Activated CD4-positive, alpha-beta memory T cell treated with anti-CD3 and anti-CD28 coated beads for 36 hours (primary cell): ENCODE measurements at regions of chr1 and their contacts with region 1.

Region 1: DNA sequence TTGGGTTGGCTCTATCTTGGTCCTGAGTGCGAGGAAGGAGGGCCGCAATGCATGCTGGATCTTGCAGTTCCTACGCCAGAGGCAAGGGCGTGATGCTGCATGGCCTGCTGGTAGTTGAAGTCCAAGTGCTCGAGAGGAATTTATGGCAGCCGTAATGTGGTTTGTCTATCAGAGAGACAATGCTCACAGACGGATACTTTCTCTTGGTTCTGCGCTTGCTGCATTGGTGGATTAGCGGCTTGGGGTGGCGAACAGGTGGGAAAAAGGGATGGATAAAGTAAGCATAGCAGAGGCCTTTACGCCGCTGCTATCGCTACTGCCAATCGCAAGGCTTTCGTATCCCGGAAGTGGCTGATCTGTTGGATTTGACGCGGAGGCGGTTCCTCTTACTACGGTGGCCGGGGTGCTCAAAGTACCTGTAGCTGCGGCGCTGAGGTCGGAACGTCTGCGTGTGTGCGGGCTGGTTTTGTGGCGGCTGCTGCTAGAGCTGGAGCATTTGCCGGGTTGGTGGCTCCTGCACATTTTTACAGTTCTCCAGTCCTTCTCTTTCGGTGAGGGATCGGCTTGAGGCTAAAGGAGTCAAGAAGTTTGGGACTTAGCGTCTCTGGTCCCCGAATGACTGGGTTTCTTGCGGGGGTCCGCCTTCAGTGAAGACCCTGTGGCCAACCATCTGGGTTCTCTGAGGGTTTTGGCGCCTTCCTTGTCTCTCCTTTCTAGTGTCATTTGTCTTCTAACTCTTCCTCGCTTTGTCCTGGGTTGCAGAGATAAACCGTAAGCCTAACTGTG is at the start of gene ATG4C:
- DNase-seq: peak; percentile 95
- H3K4me3 Mint-ChIP-seq: no peak within 1 kb of the TSS
- H3K27ac Mint-ChIP-seq: no peak within 1 kb of the TSS
- H3K4me1 Mint-ChIP-seq: peaks cover 11% of the 10 kb centered on the region
- H3K27me3 Mint-ChIP-seq: peaks cover 4% of the 10 kb centered on the region
- total RNA-seq, gene ATG4C: 14.6 to 15.9 TPM

Region 2: DNA sequence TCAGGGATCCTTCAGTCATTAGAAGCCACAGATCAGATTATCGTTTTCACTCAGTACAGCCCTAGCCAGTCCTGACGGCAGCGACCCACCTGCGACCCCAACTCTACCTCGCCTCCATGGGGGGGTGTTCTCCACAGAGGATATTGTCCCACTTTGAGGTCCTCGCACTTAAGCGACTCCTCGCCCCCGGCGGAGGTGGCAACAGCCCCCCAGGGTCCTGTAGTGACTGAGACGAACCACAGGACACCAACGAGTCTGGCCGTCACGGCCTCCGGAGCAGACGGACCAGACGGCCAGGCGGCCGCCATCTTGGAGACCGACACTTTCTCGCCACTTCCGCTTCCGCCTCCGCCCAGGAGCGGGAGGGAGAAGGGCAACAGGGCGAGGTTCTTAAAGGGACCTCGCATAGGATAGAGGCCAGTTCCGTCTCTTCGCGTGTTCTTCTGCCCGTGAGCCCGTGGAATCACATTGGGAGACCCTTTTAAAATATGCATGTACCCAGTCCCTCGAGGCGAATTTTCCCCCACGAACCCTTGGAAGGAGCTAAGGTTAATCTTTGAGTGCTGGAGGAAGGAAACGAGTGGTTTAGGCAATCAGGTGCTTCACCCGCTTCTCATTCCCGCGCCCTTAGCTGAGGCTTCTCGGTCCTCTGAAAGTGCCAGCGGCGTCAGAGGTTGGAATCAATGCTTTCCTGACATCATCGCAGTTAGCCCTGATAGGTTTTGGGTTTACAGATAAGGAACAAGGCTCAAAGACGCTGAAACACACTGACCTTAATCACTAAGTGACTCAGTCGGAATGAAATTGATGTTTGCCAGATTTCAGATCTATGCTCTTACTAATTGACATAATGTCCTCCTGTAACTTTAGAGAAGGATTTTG is 1058.9 kb before region 1 on chr1 and contains the start of gene TM2D1:
- CTCF ChIA-PET with region 1: no interaction called
- POLR2A ChIA-PET with region 1: no interaction called
- intact Hi-C with region 1: loop called (anchors 5 kb)
- DNase-seq: peak; percentile 93
- H3K4me3 Mint-ChIP-seq: peak within 1 kb of the TSS; percentile 98
- H3K27ac Mint-ChIP-seq: peak within 1 kb of the TSS; percentile 99
- H3K4me1 Mint-ChIP-seq: peaks cover 18% of the 10 kb centered on the region
- H3K27me3 Mint-ChIP-seq: no peaks in the 10 kb centered on the region
- total RNA-seq, gene TM2D1: 29.7 to 34.3 TPM

Region 3: DNA sequence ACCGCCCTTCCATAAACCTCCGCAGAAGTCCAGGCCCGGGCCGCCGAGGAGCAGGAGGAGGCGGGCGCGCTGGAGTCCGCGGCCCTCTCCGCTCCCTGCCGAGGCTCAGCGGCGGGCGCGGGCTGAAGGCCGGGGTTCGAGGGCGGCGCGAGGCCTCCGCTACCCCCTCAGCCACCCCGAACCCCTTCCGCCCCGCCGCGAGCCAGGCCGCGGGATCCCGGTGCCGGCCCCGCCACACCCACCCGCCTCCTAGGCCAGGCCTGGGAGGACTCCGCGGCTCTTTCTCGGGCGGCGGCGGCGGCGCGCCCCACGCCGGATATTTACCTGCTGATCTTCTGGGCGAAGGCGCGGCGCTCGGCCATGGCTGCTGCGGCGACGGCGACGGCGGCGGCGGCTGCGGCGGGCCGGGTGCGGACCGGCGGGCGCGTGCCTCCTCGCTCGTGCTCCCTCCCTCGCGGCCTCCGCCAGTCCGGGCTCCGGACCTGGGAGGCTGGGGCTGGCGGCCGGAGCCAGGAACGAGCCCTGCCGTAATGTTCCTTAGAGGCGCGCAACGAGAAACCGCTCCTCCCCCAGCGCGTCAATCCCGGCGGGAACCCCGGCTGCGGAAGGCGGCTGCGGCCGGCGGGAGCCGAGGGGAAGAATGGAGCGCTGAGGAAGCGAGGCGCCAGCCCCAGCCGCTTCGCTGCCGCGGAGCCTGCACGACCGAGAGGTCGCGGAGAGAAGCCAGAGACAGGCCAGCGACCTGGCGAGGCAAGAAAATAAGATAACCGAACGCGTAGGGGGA is 95.8 kb before region 1 on chr1 and contains the start of gene DOCK7:
- CTCF ChIA-PET with region 1: no interaction called
- POLR2A ChIA-PET with region 1: no interaction called
- intact Hi-C with region 1: loop called (anchors 1 kb)
- DNase-seq: peak; percentile 61
- H3K4me3 Mint-ChIP-seq: peak within 1 kb of the TSS; percentile 85
- H3K27ac Mint-ChIP-seq: peak within 1 kb of the TSS; percentile 73
- H3K4me1 Mint-ChIP-seq: peaks cover 34% of the 10 kb centered on the region
- H3K27me3 Mint-ChIP-seq: no peaks in the 10 kb centered on the region
- total RNA-seq, gene DOCK7: 15.5 to 20.4 TPM

Region 4: DNA sequence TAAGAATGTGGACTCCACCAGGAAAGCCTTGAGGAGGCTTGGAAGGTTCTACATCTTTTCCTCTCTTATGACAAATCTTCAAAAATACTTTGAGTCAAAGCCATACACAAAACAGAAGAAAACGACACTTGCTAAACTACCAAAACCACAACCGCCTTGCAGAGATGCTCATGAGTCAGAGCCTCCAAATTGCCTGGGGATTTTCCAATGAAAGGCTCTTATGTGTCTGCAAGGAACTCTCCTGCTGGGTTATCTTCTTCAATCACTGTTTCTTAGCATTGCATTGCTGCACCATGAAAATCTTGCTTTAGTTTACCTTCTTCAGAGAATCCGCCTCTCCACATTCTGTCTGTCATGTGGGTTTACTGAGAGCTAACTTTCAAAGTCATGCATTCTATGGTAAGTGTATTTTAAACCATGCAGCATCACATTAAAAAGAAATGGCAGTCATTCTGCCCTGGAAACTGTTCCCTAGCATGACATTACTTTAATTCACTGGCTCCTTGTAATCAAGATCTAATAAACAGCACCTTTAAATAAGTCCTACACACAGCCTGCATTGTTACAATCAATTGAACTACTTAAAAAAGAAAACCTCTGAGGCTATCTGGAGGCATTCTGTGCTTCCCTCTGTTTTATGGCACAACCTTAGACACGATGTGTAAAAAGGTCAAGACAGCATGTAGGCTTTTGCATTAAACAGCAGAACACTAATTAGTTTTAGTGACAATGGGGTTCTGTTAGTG is 328.4 kb after region 1 on chr1:
- CTCF ChIA-PET with region 1: no interaction called
- POLR2A ChIA-PET with region 1: no interaction called
- intact Hi-C with region 1: loop called (anchors 5 kb)
- DNase-seq: peak; percentile 28
- H3K4me3 Mint-ChIP-seq: no peak overlapping the region
- H3K27ac Mint-ChIP-seq: no peak overlapping the region
- H3K4me1 Mint-ChIP-seq: no peaks in the 10 kb centered on the region
- H3K27me3 Mint-ChIP-seq: peaks cover 11% of the 10 kb centered on the region

Region 5: DNA sequence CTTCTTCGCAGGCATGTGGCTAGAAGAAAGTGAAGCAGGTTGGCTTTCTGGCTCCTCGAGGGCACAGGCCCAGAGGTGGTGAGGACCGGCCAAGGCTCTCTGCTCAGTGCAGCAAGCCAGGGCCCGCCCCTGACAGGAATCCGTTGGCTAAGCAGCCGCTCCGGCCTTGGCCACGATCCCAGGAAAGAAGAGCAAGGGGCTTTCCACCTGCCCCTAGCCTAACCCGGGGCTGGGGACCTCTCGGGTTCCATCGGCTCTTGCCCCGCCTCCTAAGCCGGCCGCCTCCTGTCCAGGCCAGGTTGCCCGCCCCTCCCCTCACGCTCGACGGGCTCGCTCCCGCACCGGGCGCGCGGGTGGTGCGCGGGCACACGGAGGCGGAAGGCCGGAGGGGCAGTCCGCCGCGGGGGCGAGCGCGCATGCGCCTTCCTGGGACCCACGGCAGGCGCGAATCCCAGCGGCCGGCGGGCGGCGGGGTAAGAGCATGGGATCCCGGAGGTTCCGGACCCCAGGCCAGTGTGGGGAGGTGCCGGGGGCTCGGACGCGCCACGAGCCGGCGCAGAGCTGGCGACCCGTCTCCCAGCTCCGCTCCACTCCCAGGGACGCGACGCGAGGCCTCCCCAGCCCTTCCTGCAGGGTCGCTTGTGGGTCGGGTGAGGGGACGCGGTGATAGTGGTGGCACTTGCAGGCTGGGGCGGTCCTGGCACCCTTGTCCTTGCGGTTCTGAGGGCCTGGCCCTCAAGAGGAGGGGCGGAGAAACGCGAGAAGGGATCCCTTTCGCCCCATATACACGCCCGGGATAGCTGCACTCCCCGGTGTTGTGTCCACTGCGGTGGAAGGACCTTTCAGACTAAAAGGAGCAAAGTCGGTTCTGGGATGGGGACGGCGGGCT is 583.5 kb after region 1 on chr1 and contains the start of gene ALG6:
- CTCF ChIA-PET with region 1: no interaction called
- POLR2A ChIA-PET with region 1: no interaction called
- intact Hi-C with region 1: loop called (anchors 5 kb)
- DNase-seq: peak; percentile 94
- H3K4me3 Mint-ChIP-seq: peak within 1 kb of the TSS; percentile 97
- H3K27ac Mint-ChIP-seq: peak within 1 kb of the TSS; percentile 74
- H3K4me1 Mint-ChIP-seq: peaks cover 21% of the 10 kb centered on the region
- H3K27me3 Mint-ChIP-seq: peaks cover 3% of the 10 kb centered on the region
- total RNA-seq, gene ALG6: 16.0 to 18.8 TPM